ENCODE measurements at regions of chr19 and their contacts with region 1.

Region 1: GRCh38 chr19:47112997-47113849 is at the start of gene ZC3H4:
- DNase-seq: peak; percentile 98 to 100 (median 99)
- ATAC-seq: peak; percentile 82
- H3K4me3 ChIP-seq: peak within 1 kb of the TSS; percentile 83 to 94
- H3K4me3 Mint-ChIP-seq: peak within 1 kb of the TSS; percentile 96
- H3K27ac ChIP-seq: peak within 1 kb of the TSS; percentile 99
- H3K27ac Mint-ChIP-seq: peak within 1 kb of the TSS; percentile 99
- H3K4me1 ChIP-seq: peaks cover 29% of the 10 kb centered on the region
- H3K4me1 Mint-ChIP-seq: peaks cover 32% of the 10 kb centered on the region
- H3K27me3 ChIP-seq: no peaks in the 10 kb centered on the region
- H3K27me3 Mint-ChIP-seq: no peaks in the 10 kb centered on the region
- CTCF ChIP-seq: no peak
- total RNA-seq, gene ZC3H4: 30.0 to 33.0 TPM

Region 2: DNA sequence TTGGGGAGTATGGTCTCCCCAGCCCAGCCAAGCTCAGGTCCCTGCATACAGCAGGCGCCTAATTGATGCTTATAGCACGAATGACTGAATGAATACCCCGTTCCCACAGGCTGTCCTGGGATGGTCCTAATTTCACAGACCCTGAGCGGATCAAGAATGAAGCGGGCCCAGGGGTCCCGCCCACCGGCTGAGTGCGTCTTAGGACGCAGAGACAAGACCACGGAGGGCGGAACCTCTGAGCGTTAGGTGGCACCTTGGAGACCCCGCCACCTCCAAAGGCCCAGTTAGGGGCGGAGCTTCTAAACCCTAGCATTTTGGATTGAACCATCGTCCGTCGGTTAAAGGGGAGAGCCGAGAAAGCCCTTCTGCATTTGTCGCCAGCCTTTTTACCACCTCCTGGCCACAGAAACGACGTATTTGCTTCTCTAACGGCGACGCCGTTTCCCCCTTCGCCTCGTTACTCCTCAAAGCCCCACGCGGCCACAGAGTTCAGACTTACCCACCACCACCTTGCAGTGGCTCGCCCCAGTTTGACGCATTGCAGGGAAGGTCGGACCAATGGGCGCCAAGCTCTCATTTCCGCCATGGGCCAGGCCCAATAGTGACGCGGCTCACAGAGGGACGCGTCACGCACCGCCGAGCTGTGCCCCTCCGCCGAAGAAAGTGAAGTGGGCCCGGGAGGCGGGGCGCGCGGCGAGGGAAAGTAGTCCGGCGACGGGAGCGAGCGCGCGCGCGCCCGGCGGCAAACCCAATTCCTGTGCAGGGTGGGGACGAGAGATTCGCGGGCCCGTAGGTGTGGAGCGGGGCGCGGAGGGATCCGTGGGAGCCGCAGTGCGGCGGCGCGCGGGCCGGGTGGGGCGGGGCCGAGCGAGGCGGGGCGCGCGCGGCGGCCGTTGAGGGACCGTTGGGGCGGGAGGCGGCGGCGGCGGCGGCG is 512.6 kb before region 1 on chr19:
- CTCF ChIA-PET with region 1: no interaction called
- POLR2A ChIA-PET with region 1: interaction called, 10 read pairs
- intact Hi-C with region 1: loop called in 1 of 2 experiments (anchors 10 kb)
- DNase-seq: peak; percentile 95 to 99 (median 97)
- ATAC-seq: peak; percentile 89
- H3K4me3 ChIP-seq: peak overlapping the region; percentile 88 to 99
- H3K4me3 Mint-ChIP-seq: peak overlapping the region; percentile 96
- H3K27ac ChIP-seq: peak overlapping the region; percentile 100
- H3K27ac Mint-ChIP-seq: peak overlapping the region; percentile 100
- H3K4me1 ChIP-seq: peaks cover 34% of the 10 kb centered on the region
- H3K4me1 Mint-ChIP-seq: peaks cover 38% of the 10 kb centered on the region
- H3K27me3 ChIP-seq: no peaks in the 10 kb centered on the region
- H3K27me3 Mint-ChIP-seq: no peaks in the 10 kb centered on the region
- CTCF ChIP-seq: no peak

Region 3: DNA sequence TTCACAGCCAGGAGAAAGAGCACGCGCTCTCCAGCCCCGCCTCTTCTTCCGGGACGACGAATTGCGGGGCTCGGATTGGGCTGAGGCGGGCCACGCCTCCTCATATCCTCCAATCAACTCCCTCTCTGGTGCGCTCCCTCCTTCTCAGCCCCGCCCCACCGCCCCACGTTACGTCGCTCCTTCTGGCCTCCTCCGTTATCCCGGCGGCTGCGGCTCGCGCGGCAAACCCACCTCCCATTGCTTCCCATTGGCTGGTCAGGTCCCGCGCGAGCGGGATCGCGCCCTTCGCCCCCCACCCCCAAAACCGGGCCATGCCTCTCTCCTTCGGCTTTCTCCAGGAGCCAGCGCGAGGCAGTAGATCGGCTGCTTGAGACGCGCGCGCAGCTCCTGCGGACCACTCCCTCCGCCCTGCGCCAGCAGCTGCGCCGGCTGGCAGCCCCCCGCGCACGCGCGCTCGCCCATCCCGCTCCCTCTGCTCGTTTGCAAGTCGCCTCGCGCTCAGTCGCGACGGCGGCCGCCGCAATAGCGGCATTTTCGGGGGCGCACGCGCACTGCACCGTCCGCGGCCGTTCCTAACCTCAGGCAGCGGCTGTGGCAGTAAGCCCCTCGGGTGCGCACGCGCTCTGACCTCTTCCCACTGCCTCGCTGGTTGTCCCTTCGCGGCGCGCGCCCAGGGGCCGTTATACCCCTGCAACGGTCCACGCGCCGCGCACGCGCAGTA is 252.9 kb before region 1 on chr19:
- CTCF ChIA-PET with region 1: interaction called, 3 read pairs
- POLR2A ChIA-PET with region 1: interaction called, 3 read pairs
- intact Hi-C with region 1: loop called in 1 of 2 experiments (anchors 1 kb)
- DNase-seq: peak; percentile 82 to 98 (median 93)
- ATAC-seq: peak; percentile 80
- H3K4me3 ChIP-seq: peak overlapping the region; percentile 84 to 91
- H3K4me3 Mint-ChIP-seq: peak overlapping the region; percentile 92
- H3K27ac ChIP-seq: peak overlapping the region; percentile 77 to 87
- H3K27ac Mint-ChIP-seq: peak overlapping the region; percentile 94
- H3K4me1 ChIP-seq: peaks cover 44% of the 10 kb centered on the region
- H3K4me1 Mint-ChIP-seq: peaks cover 17% of the 10 kb centered on the region
- H3K27me3 ChIP-seq: no peaks in the 10 kb centered on the region
- H3K27me3 Mint-ChIP-seq: no peaks in the 10 kb centered on the region
- CTCF ChIP-seq: no peak

Region 4: GRCh38 chr19:47081111-47081510 is 32.1 kb before region 1 on chr19:
- CTCF ChIA-PET with region 1: interaction called, 38 read pairs
- POLR2A ChIA-PET with region 1: interaction called, 9 read pairs
- intact Hi-C with region 1: loop called in 1 of 2 experiments (anchors 1 kb)
- DNase-seq: no peak
- ATAC-seq: no peak
- H3K4me3 ChIP-seq: no peak overlapping the region
- H3K4me3 Mint-ChIP-seq: no peak overlapping the region
- H3K27ac ChIP-seq: no peak overlapping the region
- H3K27ac Mint-ChIP-seq: no peak overlapping the region
- H3K4me1 ChIP-seq: no peaks in the 10 kb centered on the region
- H3K4me1 Mint-ChIP-seq: no peaks in the 10 kb centered on the region
- H3K27me3 ChIP-seq: no peaks in the 10 kb centered on the region
- H3K27me3 Mint-ChIP-seq: no peaks in the 10 kb centered on the region
- CTCF ChIP-seq: no peak

Region 5: DNA sequence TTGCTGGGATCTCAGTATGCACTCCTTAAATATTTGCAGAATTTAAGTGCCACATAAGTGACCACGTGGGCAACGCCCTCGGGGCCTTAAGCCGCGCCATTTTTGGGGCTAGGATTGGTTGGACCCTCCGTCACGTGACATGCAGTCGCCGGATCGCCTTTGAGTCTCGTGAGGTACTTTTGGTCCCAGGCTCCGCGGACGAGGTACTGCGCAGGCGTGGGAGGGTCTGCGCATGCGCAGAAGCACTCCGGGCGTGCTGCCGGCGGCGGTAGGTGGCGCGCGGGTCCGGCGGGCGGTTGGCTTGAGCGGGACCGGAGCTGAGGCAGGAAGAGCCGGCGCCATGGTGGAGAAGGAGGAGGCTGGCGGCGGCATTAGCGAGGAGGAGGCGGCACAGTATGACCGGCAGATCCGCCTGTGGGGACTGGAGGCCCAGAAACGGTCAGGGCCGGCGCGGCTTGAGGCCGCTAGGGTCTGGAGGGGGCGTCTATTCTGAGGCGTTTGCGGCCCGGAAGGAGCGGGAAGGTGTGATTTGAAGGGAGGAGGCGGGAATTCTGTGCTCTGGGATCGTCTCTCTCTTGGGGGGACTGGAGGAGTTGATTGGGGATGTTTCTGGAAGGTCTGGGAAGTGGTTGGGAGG is 17.5 kb after region 1 on chr19 and contains the start of gene SAE1:
- CTCF ChIA-PET with region 1: interaction called, 16 read pairs
- POLR2A ChIA-PET with region 1: interaction called, 10 read pairs
- intact Hi-C with region 1: loop called (anchors 1 kb)
- DNase-seq: peak; percentile 85 to 95 (median 88)
- ATAC-seq: peak; percentile 88
- H3K4me3 ChIP-seq: peak within 1 kb of the TSS; percentile 91 to 99
- H3K4me3 Mint-ChIP-seq: peak within 1 kb of the TSS; percentile 99
- H3K27ac ChIP-seq: peak within 1 kb of the TSS; percentile 59 to 86
- H3K27ac Mint-ChIP-seq: peak within 1 kb of the TSS; percentile 91
- H3K4me1 ChIP-seq: peaks cover 37% of the 10 kb centered on the region
- H3K4me1 Mint-ChIP-seq: peaks cover 47% of the 10 kb centered on the region
- H3K27me3 ChIP-seq: no peaks in the 10 kb centered on the region
- H3K27me3 Mint-ChIP-seq: no peaks in the 10 kb centered on the region
- CTCF ChIP-seq: peak; percentile 67
- total RNA-seq, gene SAE1: 22.4 TPM

Region 6: DNA sequence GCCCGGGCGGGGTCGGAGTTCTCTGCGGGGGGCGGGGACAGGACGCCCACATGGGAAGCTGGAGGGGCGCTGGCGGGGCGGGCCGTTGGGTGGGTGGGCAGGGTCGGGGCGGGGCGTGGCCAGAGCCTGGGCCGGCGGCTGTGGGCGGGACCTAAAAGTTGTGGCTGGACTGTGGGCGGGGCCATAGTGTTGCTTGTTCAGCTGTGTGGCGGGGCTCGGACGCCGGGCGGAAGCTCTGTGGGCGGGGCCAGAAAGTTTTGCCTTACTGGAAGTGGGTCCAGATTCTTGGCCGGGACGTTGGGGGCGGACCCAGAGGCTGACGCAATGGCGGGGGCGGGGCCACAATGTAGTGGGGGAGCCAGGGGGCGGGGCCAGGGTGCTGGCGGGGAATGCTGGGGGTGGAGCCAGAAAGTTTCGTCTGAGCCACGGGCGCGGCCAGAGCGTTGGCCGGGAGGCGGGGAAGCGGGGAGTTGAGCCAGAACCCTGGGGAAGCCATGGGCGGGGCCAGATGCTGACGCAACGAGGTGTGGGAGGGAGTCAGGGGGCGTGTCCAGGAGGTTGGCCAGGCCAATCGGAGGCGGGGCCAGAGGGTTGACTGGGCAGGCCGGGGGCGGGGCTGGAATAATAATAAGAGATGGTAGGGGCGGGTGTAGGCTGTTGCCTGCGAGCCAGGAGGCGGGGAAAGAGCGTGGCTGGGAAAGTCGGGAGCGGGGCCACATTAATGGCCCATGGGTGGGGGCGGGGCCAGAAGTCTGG is 143.6 kb after region 1 on chr19:
- CTCF ChIA-PET with region 1: no interaction called
- POLR2A ChIA-PET with region 1: interaction called, 18 read pairs
- intact Hi-C with region 1: loop called in 1 of 2 experiments (anchors 5 kb)
- DNase-seq: peak; percentile 96 to 100 (median 98)
- ATAC-seq: peak; percentile 80
- H3K4me3 ChIP-seq: peak overlapping the region; percentile 65 to 70
- H3K4me3 Mint-ChIP-seq: peak overlapping the region; percentile 92
- H3K27ac ChIP-seq: peak overlapping the region; percentile 76 to 98
- H3K27ac Mint-ChIP-seq: peak overlapping the region; percentile 97
- H3K4me1 ChIP-seq: peaks cover 23% of the 10 kb centered on the region
- H3K4me1 Mint-ChIP-seq: peaks cover 35% of the 10 kb centered on the region
- H3K27me3 ChIP-seq: no peaks in the 10 kb centered on the region
- H3K27me3 Mint-ChIP-seq: no peaks in the 10 kb centered on the region
- CTCF ChIP-seq: no peak